ENCODE measurements at regions of chr10 and their contacts with region 1.

Region 1: GRCh38 chr10:69716711-69717560 is 84.8 kb upstream of the COL13A1 start:
- DNase-seq: no peak
- ATAC-seq: peak; percentile 90
- H3K4me3 ChIP-seq: no peak overlapping the region
- H3K27ac ChIP-seq: no peak overlapping the region
- H3K4me1 ChIP-seq: no peaks in the 10 kb centered on the region
- H3K27me3 ChIP-seq: peaks cover 3% of the 10 kb centered on the region; the same call in 1 of the 2 replicates
- CTCF ChIP-seq: peak; percentile 97

Region 2: DNA sequence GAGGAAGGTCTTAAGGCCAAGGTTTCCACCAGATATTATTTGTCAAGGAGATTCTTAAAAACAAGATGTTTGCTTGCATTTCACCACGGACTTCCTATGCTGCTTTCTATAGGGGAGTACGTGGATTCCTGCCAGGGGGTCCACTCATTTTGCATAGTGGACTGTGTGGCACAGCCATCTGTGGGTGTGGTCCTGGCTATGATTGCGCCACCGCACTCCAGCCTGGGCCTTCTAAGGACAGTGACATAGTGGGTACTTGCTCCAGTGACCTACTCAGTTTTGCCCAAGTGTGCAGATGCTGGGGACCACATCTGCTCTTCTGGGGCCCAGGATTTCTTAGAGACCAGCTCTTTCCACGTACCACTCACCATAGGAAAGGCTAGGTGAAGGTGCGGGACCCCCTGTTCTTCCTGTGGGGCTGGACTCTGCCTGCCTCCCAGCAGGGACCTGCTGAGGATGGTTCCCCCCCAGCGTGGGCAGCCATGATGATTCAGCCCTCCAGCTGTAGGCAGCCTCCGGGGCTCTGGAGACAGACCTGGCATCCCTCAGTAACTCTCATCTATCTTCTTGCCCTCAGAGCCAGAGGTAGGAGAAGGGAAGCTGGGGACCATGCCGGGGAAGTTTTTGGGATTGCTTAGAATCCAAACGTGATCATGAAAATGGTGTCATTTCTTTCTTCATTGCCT is 395.8 kb before region 1 on chr10:
- CTCF ChIA-PET with region 1: interaction called, 12 read pairs
- POLR2A ChIA-PET with region 1: no interaction called
- in situ Hi-C with region 1: no loop called
- intact Hi-C with region 1: no loop called
- DNase-seq: no peak
- ATAC-seq: no peak
- H3K4me3 ChIP-seq: no peak overlapping the region
- H3K27ac ChIP-seq: peak overlapping the region; percentile 2; the same call in 1 of the 2 replicates
- H3K4me1 ChIP-seq: peaks cover 53% of the 10 kb centered on the region
- H3K27me3 ChIP-seq: no peaks in the 10 kb centered on the region
- CTCF ChIP-seq: no peak

Region 3: DNA sequence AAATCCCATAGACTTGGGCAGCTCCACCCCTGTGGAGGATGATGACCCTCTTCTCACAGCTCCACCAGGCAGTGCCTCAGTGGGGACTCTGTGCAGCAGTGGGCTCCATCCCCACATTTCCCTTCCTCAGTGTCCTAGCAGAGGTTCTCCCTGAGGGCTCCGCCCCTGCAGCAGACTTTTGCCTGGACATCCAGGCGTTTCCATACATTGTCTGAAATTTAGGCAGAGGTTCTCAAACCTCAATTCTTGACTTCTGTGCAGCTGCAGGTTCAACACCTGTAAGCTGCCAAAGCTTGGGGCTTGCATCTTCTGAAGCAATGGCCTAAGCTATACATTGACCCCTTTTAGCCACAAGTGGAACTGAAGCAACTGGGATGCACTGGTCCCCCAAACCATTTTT is 175.5 kb before region 1 on chr10:
- CTCF ChIA-PET with region 1: no interaction called
- POLR2A ChIA-PET with region 1: no interaction called
- in situ Hi-C with region 1: no loop called
- intact Hi-C with region 1: no loop called
- DNase-seq: no peak
- ATAC-seq: no peak
- H3K4me3 ChIP-seq: no peak overlapping the region
- H3K27ac ChIP-seq: no peak overlapping the region
- H3K4me1 ChIP-seq: no peaks in the 10 kb centered on the region
- H3K27me3 ChIP-seq: no peaks in the 10 kb centered on the region
- CTCF ChIP-seq: no peak

Region 4: DNA sequence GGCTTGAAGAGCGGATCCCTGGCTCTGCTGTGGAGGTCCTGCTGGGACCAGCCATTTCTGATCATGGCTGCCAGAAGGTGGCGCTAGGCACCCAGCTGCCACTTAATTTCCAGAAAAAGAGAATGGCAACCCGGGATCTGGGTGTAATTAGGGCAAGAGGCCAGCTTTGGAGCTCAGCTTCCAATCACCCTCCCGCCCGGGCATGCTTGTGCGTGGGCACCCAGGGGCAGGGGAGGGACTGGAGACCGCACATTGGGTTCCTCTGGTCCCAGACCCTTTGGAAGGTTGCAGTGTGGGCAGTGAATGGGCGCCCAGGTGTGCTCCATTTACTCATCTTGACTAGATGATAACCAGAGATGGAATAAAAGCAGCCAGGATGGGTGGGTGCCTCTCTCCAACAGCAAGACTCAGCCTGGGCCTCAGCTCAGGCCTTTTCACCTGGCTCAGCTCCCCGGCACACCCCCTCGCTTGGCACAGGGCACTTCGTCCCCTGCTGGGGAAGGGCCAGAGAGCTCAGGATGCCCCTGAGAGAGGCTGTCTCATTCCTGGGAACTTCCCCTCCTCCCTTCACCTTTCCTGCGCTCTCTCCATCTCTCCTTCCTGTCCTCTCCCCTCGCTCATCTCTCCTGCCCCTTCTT is 72.2 kb before region 1 on chr10:
- CTCF ChIA-PET with region 1: interaction called, 4 read pairs
- POLR2A ChIA-PET with region 1: no interaction called
- in situ Hi-C with region 1: no loop called
- intact Hi-C with region 1: loop called (anchors 2 kb)
- DNase-seq: no peak
- ATAC-seq: peak; percentile 87
- H3K4me3 ChIP-seq: no peak overlapping the region
- H3K27ac ChIP-seq: no peak overlapping the region
- H3K4me1 ChIP-seq: no peaks in the 10 kb centered on the region
- H3K27me3 ChIP-seq: no peaks in the 10 kb centered on the region
- CTCF ChIP-seq: peak; percentile 99

Region 5: DNA sequence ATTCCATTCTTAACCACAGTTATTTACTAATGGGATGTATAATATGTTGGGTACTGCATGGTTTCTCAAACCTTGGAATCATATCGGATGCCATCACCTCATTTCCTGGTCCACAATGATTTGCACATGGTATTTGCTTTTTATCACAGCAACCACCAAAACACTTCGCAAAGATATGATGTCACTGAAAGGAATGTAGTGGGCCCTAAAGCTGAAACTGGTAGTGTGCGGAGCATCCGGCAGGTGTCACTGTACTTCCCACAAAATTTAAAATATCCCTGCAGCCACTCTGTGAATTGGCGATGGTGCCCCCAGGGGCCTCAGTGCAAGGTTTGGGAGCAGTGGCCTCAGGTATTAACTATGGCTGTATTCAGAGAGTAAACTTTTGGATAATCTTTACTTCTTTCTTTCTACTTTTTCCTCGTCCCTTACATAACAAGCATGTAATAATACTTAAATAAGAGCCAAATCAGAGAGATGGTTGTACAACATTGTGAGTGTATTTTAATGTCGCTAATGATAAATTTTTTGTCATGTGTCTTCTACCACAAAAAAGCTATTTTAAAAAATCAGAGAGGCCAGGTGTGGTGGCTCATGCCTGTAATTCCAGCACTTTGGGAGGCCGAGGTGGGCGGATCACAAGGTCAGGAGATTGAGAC is 20.7 kb before region 1 on chr10:
- CTCF ChIA-PET with region 1: interaction called, 6 read pairs
- POLR2A ChIA-PET with region 1: no interaction called
- in situ Hi-C with region 1: no loop called
- intact Hi-C with region 1: loop called (anchors 2 kb)
- DNase-seq: no peak
- ATAC-seq: peak; percentile 86
- H3K4me3 ChIP-seq: no peak overlapping the region
- H3K27ac ChIP-seq: no peak overlapping the region
- H3K4me1 ChIP-seq: no peaks in the 10 kb centered on the region
- H3K27me3 ChIP-seq: peaks cover 19% of the 10 kb centered on the region
- CTCF ChIP-seq: peak; percentile 93

Region 6: DNA sequence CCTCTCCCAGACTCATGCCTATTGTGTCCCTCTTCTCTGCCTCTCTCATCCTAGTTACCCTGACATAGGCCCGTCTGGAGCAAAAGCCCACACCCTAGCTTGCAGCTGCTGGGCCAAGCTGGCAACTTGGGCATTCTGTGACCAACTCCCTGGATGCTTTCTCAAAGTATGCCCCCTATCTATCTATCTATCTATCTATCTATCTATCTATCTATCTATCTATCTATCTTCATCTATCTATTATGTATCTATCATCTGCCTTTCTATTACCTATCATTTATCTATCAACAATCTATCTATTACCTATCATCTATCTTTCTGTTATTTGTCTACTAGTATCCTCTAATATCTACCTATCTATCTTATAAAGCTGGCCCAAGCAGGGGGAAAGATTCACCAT is 39.3 kb after region 1 on chr10:
- CTCF ChIA-PET with region 1: interaction called, 3 read pairs
- POLR2A ChIA-PET with region 1: interaction called, 11 read pairs
- in situ Hi-C with region 1: no loop called
- intact Hi-C with region 1: no loop called
- DNase-seq: no peak
- ATAC-seq: no peak
- H3K4me3 ChIP-seq: no peak overlapping the region
- H3K27ac ChIP-seq: no peak overlapping the region
- H3K4me1 ChIP-seq: no peaks in the 10 kb centered on the region
- H3K27me3 ChIP-seq: 0 out of 2 replicates have a peak, but pooled peaks cover 2% of the 10 kb centered on the region
- CTCF ChIP-seq: no peak

Region 7: DNA sequence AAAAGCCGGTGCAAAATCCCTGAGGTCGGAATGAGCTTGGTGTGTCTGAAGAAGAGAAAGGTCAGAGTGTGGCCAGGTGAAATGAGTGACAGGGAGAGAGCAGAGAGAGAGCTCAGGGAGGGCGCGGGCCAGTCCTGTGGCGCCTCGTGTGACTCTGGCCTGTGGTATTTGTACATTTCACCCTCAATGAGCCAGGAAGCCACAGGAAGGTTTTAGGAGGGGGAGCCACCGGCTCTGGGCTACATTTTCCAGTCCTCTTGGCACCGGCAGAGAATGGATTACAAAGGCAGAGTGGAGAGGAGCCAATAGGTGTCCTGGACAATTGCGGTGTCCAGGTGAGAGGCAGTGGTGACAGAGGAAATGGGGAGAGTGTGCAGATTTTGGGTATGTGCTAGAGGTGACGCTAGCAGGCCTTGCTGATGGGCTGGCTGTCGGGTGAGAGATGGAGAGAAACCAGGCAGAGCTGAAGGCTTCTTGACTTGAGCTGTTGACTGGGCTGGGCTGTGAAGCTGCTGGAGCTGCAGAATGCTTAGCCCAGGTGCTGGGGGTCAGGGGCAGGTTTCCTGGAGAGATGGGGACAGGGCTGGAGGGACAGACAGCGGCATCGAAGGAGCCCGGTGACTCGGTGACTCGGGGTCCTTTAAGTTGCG is 122.9 kb after region 1 on chr10:
- CTCF ChIA-PET with region 1: no interaction called
- POLR2A ChIA-PET with region 1: no interaction called
- in situ Hi-C with region 1: no loop called
- intact Hi-C with region 1: no loop called
- DNase-seq: no peak
- ATAC-seq: no peak
- H3K4me3 ChIP-seq: no peak overlapping the region
- H3K27ac ChIP-seq: no peak overlapping the region
- H3K4me1 ChIP-seq: no peaks in the 10 kb centered on the region
- H3K27me3 ChIP-seq: no peaks in the 10 kb centered on the region
- CTCF ChIP-seq: no peak

Region 8: DNA sequence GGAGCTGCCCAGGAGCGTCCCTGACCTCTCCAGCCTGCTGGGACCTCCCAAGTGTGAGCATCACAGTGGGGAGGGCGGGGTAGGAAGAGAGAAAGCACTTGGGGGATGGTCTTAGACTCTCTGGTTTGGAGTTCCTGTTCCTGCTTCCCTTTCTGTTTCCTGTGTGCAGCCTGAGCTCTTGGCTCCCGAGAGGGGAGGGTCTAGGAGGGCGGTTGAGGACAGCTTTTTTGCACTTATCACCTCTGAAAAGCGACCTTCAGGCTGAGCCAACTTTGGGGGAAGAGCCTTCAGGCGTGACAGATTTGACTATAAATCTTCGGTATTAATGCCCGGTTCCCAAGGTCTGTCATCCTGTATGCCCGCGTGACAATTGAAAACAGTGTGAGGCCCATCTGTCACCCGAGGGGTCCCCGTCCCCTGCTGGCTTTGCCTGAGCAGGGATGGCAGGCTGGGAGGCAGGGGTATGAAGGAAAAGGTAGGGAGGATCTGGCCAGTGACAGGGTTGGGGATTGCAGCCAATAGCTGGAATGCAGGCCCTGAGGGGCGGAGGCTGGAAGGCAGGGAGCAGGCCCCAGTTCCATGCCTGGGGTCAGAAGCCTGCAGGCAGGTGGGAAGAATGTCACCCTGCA is 1758.4 kb after region 1 on chr10:
- CTCF ChIA-PET with region 1: no interaction called
- POLR2A ChIA-PET with region 1: no interaction called
- in situ Hi-C with region 1: no loop called
- intact Hi-C with region 1: no loop called
- DNase-seq: no peak
- ATAC-seq: no peak
- H3K4me3 ChIP-seq: no peak overlapping the region
- H3K27ac ChIP-seq: no peak overlapping the region
- H3K4me1 ChIP-seq: no peaks in the 10 kb centered on the region
- H3K27me3 ChIP-seq: peaks cover 14% of the 10 kb centered on the region; the same call in 1 of the 2 replicates
- CTCF ChIP-seq: no peak

Measured in Panc1 (cell line).